Activated CD8-positive, alpha-beta T cell treated with anti-CD3 and anti-CD28 coated beads for 36 hours (primary cell): ENCODE measurements at regions of chr3 and their contacts with region 1.

Region 1: DNA sequence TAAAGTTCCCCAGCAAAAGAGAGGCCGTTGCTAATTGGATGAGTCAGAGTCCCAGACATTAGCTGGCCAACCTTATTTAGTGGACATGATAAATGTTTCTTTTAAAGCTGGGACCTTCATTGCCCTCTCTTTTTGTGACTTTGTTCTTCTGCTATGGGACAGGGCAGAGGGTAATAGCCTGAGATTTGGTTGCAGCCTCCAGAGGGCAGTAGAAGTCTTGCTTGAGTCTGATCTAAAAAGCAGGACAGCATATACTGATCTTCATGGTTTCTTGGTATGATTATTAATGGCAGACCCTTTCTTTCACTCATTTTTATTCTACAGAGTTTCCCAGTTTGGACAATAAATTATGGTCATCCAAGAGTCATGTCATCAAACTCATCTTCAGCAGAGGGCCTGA is 25.1 kb upstream of the ZKSCAN7 start:
- DNase-seq: peak; percentile 47
- ATAC-seq: peak; percentile 45
- H3K4me3 Mint-ChIP-seq: no peak overlapping the region
- H3K27ac Mint-ChIP-seq: no peak overlapping the region
- H3K4me1 Mint-ChIP-seq: no peaks in the 10 kb centered on the region
- H3K27me3 Mint-ChIP-seq: peaks cover 12% of the 10 kb centered on the region
- CTCF ChIP-seq: peak; percentile 40

Region 2: GRCh38 chr3:44323341-44323955 is 206.5 kb before region 1 on chr3:
- CTCF ChIA-PET with region 1: interaction called, 3 read pairs
- POLR2A ChIA-PET with region 1: no interaction called
- intact Hi-C with region 1: loop called (anchors 10 kb)
- DNase-seq: peak; percentile 77
- ATAC-seq: no peak
- H3K4me3 Mint-ChIP-seq: no peak overlapping the region
- H3K27ac Mint-ChIP-seq: no peak overlapping the region
- H3K4me1 Mint-ChIP-seq: no peaks in the 10 kb centered on the region
- H3K27me3 Mint-ChIP-seq: peaks cover 4% of the 10 kb centered on the region
- CTCF ChIP-seq: peak; percentile 82

Region 3: DNA sequence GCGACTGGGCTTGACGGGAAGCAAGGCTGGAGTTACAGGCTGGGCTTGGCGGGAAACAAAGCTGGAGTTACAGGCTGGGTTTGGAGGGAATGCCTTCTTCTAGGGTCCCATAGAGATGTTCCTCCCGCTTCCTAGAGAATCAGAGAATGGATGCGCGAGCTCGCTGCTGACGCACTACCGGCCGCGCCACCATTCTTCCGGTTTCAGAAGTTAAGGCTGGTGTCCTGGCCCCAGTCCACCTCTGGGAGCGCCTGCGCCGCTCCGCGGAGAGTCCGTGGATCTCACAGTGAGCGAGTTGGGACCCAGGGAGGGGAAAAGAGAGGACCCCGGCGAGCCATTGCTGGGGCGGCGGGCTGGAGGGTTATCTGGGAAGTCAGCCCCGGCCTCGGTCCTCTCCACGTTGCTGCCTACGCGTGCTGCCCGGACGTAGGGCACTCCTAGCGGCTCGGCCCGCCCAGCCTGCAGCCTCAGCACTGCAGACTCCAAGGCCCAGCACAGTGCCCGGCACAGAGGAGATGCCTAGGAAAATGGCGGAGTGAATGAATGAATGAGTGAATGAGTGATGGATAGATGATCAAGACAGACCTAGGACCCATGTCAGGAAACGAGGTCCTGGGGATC is 182.6 kb after region 1 on chr3 and contains the start of gene ZNF502:
- CTCF ChIA-PET with region 1: no interaction called
- POLR2A ChIA-PET with region 1: no interaction called
- intact Hi-C with region 1: loop called (anchors 10 kb)
- DNase-seq: peak; percentile 84
- ATAC-seq: peak; percentile 95
- H3K4me3 Mint-ChIP-seq: peak within 1 kb of the TSS; percentile 92
- H3K27ac Mint-ChIP-seq: peak within 1 kb of the TSS; percentile 86
- H3K4me1 Mint-ChIP-seq: peaks cover 18% of the 10 kb centered on the region
- H3K27me3 Mint-ChIP-seq: peaks cover 16% of the 10 kb centered on the region
- CTCF ChIP-seq: peak; percentile 19
- total RNA-seq, gene ZNF502: 2.0 to 2.3 TPM

Region 4: DNA sequence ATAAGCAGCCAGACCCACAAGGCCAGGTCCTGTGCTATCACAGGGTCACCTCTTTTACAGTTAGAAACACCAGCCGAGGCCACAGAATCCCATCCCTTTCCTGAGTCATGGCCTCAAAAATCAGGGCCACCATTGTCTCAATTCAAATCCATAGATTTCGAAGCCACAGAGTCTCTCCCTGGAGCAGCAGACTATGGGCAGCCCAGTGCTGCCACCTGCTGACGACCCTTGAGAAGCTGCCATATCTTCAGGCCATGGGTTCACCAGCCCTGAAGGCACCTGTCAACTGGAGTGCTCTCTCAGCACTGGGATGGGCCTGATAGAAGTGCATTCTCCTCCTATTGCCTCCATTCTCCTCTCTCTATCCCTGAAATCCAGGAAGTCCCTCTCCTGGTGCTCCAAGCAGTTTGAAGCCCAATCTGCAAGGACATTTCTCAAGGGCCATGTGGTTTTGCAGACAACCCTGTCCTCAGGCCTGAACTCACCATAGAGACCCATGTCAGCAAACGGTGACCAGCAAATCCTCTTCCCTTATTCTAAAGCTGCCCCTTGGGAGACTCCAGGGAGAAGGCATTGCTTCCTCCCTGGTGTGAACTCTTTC is 384.0 kb after region 1 on chr3:
- CTCF ChIA-PET with region 1: interaction called, 23 read pairs
- POLR2A ChIA-PET with region 1: no interaction called
- intact Hi-C with region 1: loop called (anchors 2 kb)
- DNase-seq: peak; percentile 77
- ATAC-seq: peak; percentile 83
- H3K4me3 Mint-ChIP-seq: no peak overlapping the region
- H3K27ac Mint-ChIP-seq: no peak overlapping the region
- H3K4me1 Mint-ChIP-seq: no peaks in the 10 kb centered on the region
- H3K27me3 Mint-ChIP-seq: peaks cover 6% of the 10 kb centered on the region
- CTCF ChIP-seq: peak; percentile 78